CD4-positive, alpha-beta T cell (primary cell): ENCODE measurements at regions of chr12 and their contacts with region 1.

Region 1: GRCh38 chr12:56759263-56759908 is 3.7 kb upstream of the HSD17B6 start:
- DNase-seq: no peak
- ATAC-seq: no peak
- H3K4me3 ChIP-seq: no peak overlapping the region
- H3K4me3 Mint-ChIP-seq: no peak overlapping the region
- H3K27ac ChIP-seq: no peak overlapping the region
- H3K27ac Mint-ChIP-seq: no peak overlapping the region
- H3K4me1 ChIP-seq: peaks cover 4% of the 10 kb centered on the region
- H3K4me1 Mint-ChIP-seq: no peaks in the 10 kb centered on the region
- H3K27me3 ChIP-seq: no peaks in the 10 kb centered on the region
- H3K27me3 Mint-ChIP-seq: no peaks in the 10 kb centered on the region
- CTCF ChIP-seq: no peak

Region 2: DNA sequence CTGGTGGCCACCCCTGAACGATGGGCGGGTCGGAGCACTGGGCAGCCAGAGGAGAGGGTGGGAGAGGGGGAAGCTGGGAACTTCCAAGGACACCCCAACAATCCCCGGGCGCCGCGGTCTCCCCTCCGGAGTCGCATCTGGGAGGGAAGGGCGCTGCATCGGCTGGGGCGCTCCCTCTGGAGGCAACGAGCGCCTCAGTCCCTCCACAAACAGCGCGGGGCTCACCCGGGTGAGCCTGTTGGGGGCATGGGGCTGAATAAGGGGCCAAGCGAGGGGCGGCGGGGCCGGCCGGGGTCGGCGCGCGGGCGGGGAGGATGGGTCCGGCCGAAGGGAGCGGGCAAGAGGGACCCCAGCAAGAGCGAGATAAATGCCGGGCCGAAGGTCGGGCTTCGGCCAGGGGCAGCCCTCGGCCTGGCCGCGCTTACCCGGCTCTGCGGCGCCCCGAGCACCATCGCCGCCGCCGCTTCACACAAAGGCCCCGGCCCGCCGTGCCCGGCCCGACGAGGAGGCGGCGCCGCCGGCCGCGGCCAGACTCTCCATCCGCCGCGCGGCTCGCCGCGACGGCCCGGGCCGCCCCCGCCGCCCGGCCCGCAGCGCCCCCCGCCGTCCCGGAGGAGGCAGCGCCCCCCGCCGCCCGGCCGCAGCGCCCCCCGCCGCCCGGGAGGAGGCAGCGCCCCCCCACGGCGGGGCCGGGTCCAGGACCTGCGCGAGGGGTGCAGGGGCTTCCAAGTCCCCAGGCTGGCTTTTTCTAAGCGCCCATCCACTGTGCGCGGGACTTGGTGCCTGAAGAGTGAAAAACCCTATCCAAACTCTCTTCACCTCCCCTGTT is 246.8 kb after region 1 on chr12 and contains the start of gene ZBTB39:
- CTCF ChIA-PET with region 1: interaction called, 15 read pairs
- POLR2A ChIA-PET with region 1: no interaction called
- intact Hi-C with region 1: loop called (anchors 5 kb)
- DNase-seq: peak; percentile 32 to 90 (median 60)
- ATAC-seq: peak; percentile 74
- H3K4me3 ChIP-seq: peak within 1 kb of the TSS; percentile 76
- H3K4me3 Mint-ChIP-seq: peak within 1 kb of the TSS; percentile 93
- H3K27ac ChIP-seq: peak within 1 kb of the TSS; percentile 33 to 47
- H3K27ac Mint-ChIP-seq: peak within 1 kb of the TSS; percentile 81
- H3K4me1 ChIP-seq: peaks cover 51% of the 10 kb centered on the region
- H3K4me1 Mint-ChIP-seq: peaks cover 66% of the 10 kb centered on the region
- H3K27me3 ChIP-seq: no peaks in the 10 kb centered on the region
- H3K27me3 Mint-ChIP-seq: no peaks in the 10 kb centered on the region
- CTCF ChIP-seq: peak; percentile 49
- total RNA-seq, gene ZBTB39: 6.9 to 8.0 TPM

Region 3: GRCh38 chr12:57069523-57069922 is 310.1 kb after region 1 on chr12:
- CTCF ChIA-PET with region 1: interaction called, 3 read pairs
- POLR2A ChIA-PET with region 1: no interaction called
- intact Hi-C with region 1: loop called in 1 of 2 experiments (anchors 5 kb)
- DNase-seq: peak in 13 of 14 experiments; percentile 20 to 89 (median 51)
- ATAC-seq: peak; percentile 99
- H3K4me3 ChIP-seq: no peak overlapping the region
- H3K4me3 Mint-ChIP-seq: peak overlapping the region; percentile 18
- H3K27ac ChIP-seq: peak overlapping the region; percentile 34 to 38
- H3K27ac Mint-ChIP-seq: peak overlapping the region; percentile 81
- H3K4me1 ChIP-seq: peaks cover 9% of the 10 kb centered on the region
- H3K4me1 Mint-ChIP-seq: peaks cover 31% of the 10 kb centered on the region
- H3K27me3 ChIP-seq: no peaks in the 10 kb centered on the region
- H3K27me3 Mint-ChIP-seq: no peaks in the 10 kb centered on the region
- CTCF ChIP-seq: peak; percentile 87

Region 4: GRCh38 chr12:57116580-57117281 is 357.3 kb after region 1 on chr12:
- CTCF ChIA-PET with region 1: interaction called, 14 read pairs
- POLR2A ChIA-PET with region 1: interaction called, 3 read pairs
- intact Hi-C with region 1: loop called (anchors 1 to 2 kb)
- DNase-seq: no peak
- ATAC-seq: no peak
- H3K4me3 ChIP-seq: no peak overlapping the region
- H3K4me3 Mint-ChIP-seq: no peak overlapping the region
- H3K27ac ChIP-seq: no peak overlapping the region
- H3K27ac Mint-ChIP-seq: no peak overlapping the region
- H3K4me1 ChIP-seq: peaks cover 12% of the 10 kb centered on the region
- H3K4me1 Mint-ChIP-seq: peaks cover 11% of the 10 kb centered on the region
- H3K27me3 ChIP-seq: no peaks in the 10 kb centered on the region
- H3K27me3 Mint-ChIP-seq: peaks cover 4% of the 10 kb centered on the region
- CTCF ChIP-seq: no peak

Region 5: GRCh38 chr12:57182921-57183790 is 423.8 kb after region 1 on chr12:
- CTCF ChIA-PET with region 1: no interaction called
- POLR2A ChIA-PET with region 1: no interaction called
- intact Hi-C with region 1: loop called in 1 of 2 experiments (anchors 5 kb)
- DNase-seq: peak; percentile 66 to 88 (median 79)
- ATAC-seq: peak; percentile 100
- H3K4me3 ChIP-seq: no peak overlapping the region
- H3K4me3 Mint-ChIP-seq: no peak overlapping the region
- H3K27ac ChIP-seq: no peak overlapping the region
- H3K27ac Mint-ChIP-seq: no peak overlapping the region
- H3K4me1 ChIP-seq: peaks cover 6% of the 10 kb centered on the region
- H3K4me1 Mint-ChIP-seq: no peaks in the 10 kb centered on the region
- H3K27me3 ChIP-seq: no peaks in the 10 kb centered on the region
- H3K27me3 Mint-ChIP-seq: no peaks in the 10 kb centered on the region
- CTCF ChIP-seq: peak; percentile 80